Endothelial cell of umbilical vein (primary cell): ENCODE measurements at regions of chr5 and their contacts with region 1.

Region 1: DNA sequence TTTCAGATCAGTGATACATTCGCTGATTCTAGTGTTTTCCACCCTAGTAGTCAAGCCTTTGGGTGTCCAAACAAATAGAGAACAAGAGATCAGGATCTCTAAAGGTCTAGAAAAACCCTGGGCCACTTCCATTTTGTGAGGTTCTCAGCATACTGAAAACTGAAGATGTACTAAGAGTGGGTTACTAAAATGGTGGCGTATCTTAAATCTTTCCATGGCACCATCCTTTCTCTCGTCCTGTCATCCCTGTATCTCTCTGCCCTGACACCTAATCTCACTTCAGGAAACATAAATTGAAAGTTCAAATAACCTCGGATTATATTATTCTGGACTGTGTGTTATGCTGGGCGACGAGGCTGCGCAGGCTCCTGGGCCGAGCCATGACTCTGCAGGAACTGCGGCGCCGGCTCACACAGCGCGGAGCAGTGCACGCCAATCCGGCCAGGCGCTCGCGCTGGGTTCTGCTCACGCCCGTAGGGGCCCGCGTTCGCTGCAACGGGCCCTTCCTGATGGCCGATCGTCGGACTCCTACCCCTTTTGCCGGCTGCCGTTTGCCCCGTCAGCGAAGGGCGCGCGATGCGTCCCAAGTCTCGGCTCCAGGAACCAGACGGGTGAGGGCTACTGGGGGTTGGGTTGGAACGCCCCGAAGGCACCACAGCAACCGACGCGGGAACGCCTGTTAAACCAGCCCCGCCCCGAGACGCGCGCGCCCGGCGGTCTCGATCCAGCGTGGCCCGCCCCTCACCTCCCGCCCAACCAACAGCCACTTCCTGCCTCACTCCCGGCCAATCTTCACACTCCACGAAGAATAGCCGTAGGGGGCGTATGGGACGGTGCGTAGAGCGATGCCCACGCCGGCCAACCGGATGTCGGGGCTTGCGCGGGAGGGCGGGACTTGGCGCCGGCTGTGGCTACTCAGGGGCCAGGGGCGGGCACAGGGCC is 503 bp upstream of the CANX start:
- DNase-seq: peak; percentile 100
- H3K4me3 ChIP-seq: peak overlapping the region; percentile 34 to 77 (median 70)
- H3K27ac ChIP-seq: peak overlapping the region; percentile 94
- H3K4me1 ChIP-seq: peaks cover 18% of the 10 kb centered on the region
- H3K27me3 ChIP-seq: no peaks in the 10 kb centered on the region
- CTCF ChIP-seq: no peak
- POLR2A ChIP-seq: peak; percentile 63

Region 2: DNA sequence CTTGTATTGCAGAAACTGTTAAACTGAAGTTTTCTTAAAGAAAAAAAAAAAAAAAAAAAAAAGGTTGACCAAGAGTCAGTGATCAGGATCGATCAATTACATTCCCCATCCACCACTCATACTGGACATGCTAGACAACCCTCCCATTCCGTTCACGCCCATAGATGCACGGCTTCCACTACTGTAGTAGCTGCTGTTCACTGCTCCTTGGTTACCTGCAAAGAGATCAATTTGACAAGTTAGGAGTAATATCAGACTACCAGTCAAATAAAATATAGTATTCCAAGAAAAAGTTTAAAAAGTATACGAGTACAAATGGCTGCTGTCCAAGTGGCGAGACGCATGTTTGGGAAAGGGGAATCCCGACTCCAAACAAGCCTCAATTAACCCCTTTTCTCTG is 83.5 kb before region 1 on chr5:
- CTCF ChIA-PET with region 1: no interaction called
- POLR2A ChIA-PET with region 1: no interaction called
- dilution Hi-C with region 1: no loop called
- intact Hi-C with region 1: no loop called
- DNase-seq: no peak
- H3K4me3 ChIP-seq: no peak overlapping the region
- H3K27ac ChIP-seq: no peak overlapping the region
- H3K4me1 ChIP-seq: peaks cover 28% of the 10 kb centered on the region
- H3K27me3 ChIP-seq: no peaks in the 10 kb centered on the region
- CTCF ChIP-seq: no peak
- POLR2A ChIP-seq: no peak

Region 3: GRCh38 chr5:179678223-179679013 is 19.8 kb before region 1 on chr5:
- CTCF ChIA-PET with region 1: interaction called, 6 read pairs
- POLR2A ChIA-PET with region 1: no interaction called
- dilution Hi-C with region 1: no loop called
- intact Hi-C with region 1: loop called (anchors 1 kb)
- DNase-seq: peak; percentile 96
- H3K4me3 ChIP-seq: peak overlapping the region; percentile 62 to 64 (median 63)
- H3K27ac ChIP-seq: peak overlapping the region; percentile 35
- H3K4me1 ChIP-seq: no peaks in the 10 kb centered on the region
- H3K27me3 ChIP-seq: no peaks in the 10 kb centered on the region
- CTCF ChIP-seq: no peak
- POLR2A ChIP-seq: peak; percentile 98

Region 4: DNA sequence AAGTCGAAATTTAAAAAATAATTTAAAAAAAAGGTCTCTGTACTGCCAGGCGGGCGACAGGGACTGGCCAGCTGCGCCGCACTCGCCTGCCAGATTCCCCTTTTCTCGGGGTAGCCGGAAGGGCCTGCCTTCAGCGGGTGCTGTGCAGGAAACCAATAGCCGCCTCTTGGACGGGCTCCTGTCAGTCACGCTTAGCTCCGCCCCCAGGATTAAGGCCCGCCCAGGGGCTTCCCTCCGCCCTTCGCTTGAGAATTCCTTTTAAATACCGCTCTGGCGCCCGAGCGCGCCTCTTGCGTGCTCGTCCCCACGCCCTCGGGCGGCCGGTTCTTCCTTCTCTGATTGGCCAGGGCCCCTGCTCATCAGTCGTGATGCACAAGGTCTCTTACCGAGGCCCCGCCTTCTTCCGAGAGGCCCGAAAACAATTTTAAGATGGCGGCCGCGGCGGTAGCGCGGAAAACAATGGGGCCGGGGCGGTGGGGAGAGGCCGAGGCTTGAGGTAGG is 34.2 kb after region 1 on chr5 and contains the start of gene MAML1:
- CTCF ChIA-PET with region 1: interaction called, 3 read pairs
- POLR2A ChIA-PET with region 1: interaction called, 6 read pairs
- dilution Hi-C with region 1: no loop called
- intact Hi-C with region 1: loop called (anchors 1 kb)
- DNase-seq: peak; percentile 100
- H3K4me3 ChIP-seq: peak within 1 kb of the TSS; percentile 64 to 92 (median 77)
- H3K27ac ChIP-seq: peak within 1 kb of the TSS; percentile 70
- H3K4me1 ChIP-seq: peaks cover 28% of the 10 kb centered on the region
- H3K27me3 ChIP-seq: no peaks in the 10 kb centered on the region
- CTCF ChIP-seq: no peak
- POLR2A ChIP-seq: peak; percentile 83
- total RNA-seq, gene MAML1: 29.0 and 30.1 TPM in 2 replicates

Region 5: DNA sequence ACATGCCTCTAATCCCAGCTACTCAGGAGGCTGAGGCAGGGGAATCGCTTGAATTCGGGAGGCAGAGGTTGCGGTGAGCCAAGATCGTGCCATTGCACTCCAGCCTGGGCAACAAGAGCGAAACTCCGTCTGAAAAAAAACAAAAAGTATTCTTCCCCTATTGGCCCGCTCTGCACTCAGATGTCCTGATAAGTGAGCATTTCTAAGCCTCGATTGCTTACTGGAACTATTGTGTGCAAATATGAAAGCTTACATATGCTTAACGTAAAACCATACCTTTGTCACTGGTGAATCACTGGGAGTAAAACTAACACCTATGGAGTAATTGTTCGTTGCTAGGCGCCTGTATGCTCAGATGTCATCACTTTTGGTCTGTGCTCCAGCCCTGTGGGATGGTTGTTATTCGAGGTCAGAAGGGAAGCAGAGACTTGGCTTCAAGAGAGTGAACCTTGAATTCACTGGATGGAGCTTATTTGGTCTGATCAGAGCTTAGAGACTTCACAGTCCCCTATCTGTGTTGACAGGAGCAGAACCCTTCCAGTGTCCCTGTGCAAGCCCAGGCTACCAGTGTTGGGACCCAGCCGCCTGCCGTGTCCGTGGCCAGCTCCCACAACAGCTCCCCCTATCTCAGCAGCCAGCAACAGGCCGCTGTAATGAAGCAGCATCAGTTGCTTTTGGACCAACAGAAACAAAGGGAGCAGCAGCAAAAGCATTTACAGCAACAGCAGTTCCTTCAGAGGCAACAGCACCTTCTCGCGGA is 70.2 kb after region 1 on chr5:
- CTCF ChIA-PET with region 1: no interaction called
- POLR2A ChIA-PET with region 1: no interaction called
- dilution Hi-C with region 1: no loop called
- intact Hi-C with region 1: no loop called
- DNase-seq: no peak
- H3K4me3 ChIP-seq: no peak overlapping the region
- H3K27ac ChIP-seq: no peak overlapping the region
- H3K4me1 ChIP-seq: peaks cover 33% of the 10 kb centered on the region
- H3K27me3 ChIP-seq: no peaks in the 10 kb centered on the region
- CTCF ChIP-seq: no peak
- POLR2A ChIP-seq: no peak

Region 6: DNA sequence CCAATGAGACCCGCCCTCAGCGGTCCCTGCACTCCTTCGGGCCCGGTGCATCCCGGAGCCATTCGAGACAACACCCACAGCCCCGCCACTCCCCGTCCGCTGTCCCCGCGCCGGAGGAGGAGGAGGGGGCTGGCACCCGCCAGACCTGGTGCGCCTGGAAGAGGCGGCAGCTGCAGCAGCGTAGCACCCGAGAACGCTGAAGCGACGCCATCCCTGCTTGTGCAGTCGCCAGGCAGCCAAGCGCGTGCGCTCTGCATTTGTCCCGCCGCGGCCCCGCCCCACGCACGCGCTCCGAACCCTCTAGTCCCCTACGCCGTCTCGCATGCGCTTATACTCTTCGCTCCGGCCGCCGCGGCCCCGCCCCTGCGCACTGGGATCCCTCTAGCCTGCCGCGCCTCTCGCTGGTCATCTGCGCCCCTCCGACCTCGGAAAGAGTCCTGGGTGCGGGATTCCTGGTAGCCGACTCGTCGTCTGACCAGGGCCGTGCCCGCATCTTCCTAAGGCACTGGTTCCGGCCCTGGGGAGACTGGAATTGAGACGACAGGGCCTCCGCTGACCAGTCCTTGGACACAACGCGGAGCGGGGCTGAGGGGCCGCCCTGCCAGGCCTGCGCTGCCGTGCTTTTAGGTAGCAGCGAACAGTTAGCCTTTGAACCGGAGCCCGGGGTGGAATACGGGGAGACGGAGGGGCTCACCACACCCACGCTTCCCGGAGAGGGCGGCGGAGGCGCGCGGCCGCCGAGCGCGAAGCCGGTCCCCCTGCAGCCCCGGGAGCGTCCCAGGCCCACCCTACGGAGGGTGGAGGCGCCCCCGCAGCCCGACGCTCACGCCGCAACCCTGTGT is 160.5 kb after region 1 on chr5 and contains the start of gene MRNIP:
- CTCF ChIA-PET with region 1: no interaction called
- POLR2A ChIA-PET with region 1: no interaction called
- dilution Hi-C with region 1: no loop called
- intact Hi-C with region 1: loop called (anchors 1 kb)
- DNase-seq: peak; percentile 97
- H3K4me3 ChIP-seq: peak within 1 kb of the TSS; percentile 60 to 97 (median 75)
- H3K27ac ChIP-seq: no peak within 1 kb of the TSS
- H3K4me1 ChIP-seq: no peaks in the 10 kb centered on the region
- H3K27me3 ChIP-seq: no peaks in the 10 kb centered on the region
- CTCF ChIP-seq: peak in 1 of 2 donors; percentile 9
- POLR2A ChIP-seq: peak; percentile 82
- total RNA-seq, gene MRNIP: 17.6 and 19.1 TPM in 2 replicates

Region 7: GRCh38 chr5:181243512-181244343 is 1545.5 kb after region 1 on chr5 and contains the start of gene RACK1:
- CTCF ChIA-PET with region 1: no interaction called
- POLR2A ChIA-PET with region 1: no interaction called
- dilution Hi-C with region 1: no loop called
- intact Hi-C with region 1: loop called (anchors 5 kb)
- DNase-seq: peak; percentile 95
- H3K4me3 ChIP-seq: peak within 1 kb of the TSS; percentile 66 to 96 (median 89)
- H3K27ac ChIP-seq: peak within 1 kb of the TSS; percentile 91
- H3K4me1 ChIP-seq: peaks cover 42% of the 10 kb centered on the region
- H3K27me3 ChIP-seq: no peaks in the 10 kb centered on the region
- CTCF ChIP-seq: no peak
- POLR2A ChIP-seq: peak; percentile 93
- total RNA-seq, gene RACK1: 1,910 and 2,029 TPM in 2 replicates